Heart left ventricle (tissue), 16 donors: ENCODE measurements at regions of chr12 and their contacts with region 1.

Region 1: DNA sequence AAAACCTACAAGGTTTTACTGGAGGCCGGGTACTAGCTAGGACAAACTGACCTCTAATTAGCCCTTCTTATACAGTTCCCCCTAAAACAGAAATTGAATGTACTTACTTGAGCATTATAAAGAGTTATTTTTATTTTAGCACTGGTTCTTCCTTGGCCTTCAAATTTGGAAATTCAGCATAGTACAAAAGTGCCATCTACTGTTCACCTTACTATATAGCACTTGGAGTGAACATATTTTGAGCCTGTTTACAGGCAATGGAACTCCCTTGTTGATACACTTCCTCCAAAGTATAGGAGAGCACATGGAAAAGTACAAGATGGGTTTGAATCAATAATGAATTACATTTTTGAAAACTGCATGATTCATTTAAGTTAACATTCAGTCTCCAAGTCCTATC is 3.9 kb upstream of the POC1B start:
- DNase-seq: no peak
- ATAC-seq: no peak
- H3K4me3 ChIP-seq: no peak overlapping the region
- H3K27ac ChIP-seq: no peak overlapping the region
- H3K4me1 ChIP-seq: peaks cover 0 to 16% (median 10%) of the 10 kb centered on the region in 12 donors
- H3K27me3 ChIP-seq: no peaks in the 10 kb centered on the region
- CTCF ChIP-seq: peak; percentile 55 to 79 (median 72)
- POLR2A ChIP-seq: no peak

Region 2: DNA sequence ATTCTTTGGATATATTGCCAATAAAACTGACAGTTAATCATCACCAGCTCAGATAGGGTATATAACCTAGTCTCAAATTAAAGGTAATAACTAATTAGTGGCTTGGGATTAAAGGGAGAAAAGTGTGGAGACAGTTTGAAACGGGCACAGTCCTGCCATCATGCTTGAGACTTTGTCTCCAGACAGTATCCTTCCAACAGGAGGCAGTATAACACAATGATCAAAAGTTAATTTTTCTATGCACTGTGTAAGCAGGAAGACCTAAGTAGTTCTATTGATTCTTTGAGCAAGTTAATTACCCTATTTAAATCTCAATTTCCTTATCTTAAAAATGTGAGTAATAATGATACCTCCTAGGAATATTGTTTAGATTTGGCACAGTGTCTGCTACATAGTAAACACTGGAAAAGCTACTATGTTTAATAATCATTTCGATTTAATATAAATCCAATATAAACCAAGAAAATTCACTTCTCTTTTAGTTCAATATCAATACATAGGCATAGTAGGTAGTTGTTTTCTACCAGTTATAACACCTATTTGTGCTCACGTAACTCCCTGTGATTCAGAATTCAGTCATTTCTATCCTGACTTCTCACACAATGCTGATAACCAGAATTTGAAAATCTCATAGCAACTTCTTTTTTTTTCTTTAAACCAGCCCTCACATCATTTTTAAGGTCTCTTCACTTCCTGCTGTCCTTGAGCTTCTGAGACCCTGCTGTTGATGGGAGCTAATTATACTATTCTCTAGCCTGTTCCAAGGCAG is 58.8 kb before region 1 on chr12:
- intact Hi-C with region 1: loop called (anchors 1 to 5 kb)
- DNase-seq: no peak
- ATAC-seq: peak; percentile 71 to 77 (median 74)
- H3K4me3 ChIP-seq: no peak overlapping the region
- H3K27ac ChIP-seq: no peak overlapping the region
- H3K4me1 ChIP-seq: peaks cover 0 to 19% (median 0%) of the 10 kb centered on the region in 12 donors
- H3K27me3 ChIP-seq: no peaks in the 10 kb centered on the region
- CTCF ChIP-seq: peak; percentile 47 to 74 (median 62)
- POLR2A ChIP-seq: no peak